ENCODE measurements at regions of chr1 and their contacts with region 1.

Region 1: GRCh38 chr1:111538343-111539025 is 35.1 kb upstream of the ADORA3 start:
- DNase-seq: no peak
- H3K4me3 ChIP-seq: no peak overlapping the region
- H3K27ac ChIP-seq: no peak overlapping the region
- H3K4me1 ChIP-seq: no peaks in the 10 kb centered on the region
- H3K27me3 ChIP-seq: no peaks in the 10 kb centered on the region
- CTCF ChIP-seq: no peak
- POLR2A ChIP-seq: no peak

Region 2: GRCh38 chr1:111481387-111482221 is 56.9 kb before region 1 on chr1:
- intact Hi-C with region 1: loop called (anchors 2 kb)
- DNase-seq: peak in 1 of 2 donors; percentile 50
- H3K4me3 ChIP-seq: no peak overlapping the region
- H3K27ac ChIP-seq: no peak overlapping the region
- H3K4me1 ChIP-seq: no peaks in the 10 kb centered on the region
- H3K27me3 ChIP-seq: no peaks in the 10 kb centered on the region
- CTCF ChIP-seq: peak in 2 of 3 donors; percentile 38 to 40
- POLR2A ChIP-seq: no peak

Region 3: DNA sequence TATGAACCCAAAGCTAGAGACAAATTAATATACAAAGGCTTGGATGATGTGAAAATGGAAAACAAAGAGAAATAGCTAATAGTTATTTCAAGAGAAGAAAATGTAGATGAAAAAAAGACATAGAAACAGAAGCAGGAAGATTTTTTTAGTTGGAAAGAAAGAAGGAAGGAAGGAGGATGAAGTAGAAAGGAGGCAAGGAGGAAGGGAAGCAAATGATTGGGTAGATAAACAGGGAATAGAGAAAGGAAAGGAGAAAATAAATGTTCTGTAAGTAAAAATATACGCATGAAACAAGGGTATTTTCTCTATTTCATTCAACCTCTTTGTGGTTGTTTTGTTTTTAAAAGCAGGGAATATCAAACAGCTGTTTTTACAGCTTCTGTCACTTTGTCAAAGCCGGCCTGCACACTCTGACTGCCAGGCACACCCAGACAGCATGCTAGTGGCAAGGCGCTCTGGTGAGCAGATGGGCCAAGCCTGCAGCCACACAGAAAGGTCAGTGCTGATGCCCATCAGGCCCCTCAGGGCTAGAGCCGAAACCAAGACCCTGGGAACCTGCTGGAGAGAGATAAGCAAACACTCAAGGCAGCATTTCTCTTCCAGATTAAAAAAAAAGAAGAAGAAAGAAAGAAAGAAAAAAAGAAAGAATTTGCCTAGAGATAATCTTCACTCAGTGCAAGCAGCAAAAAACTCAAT is 784.6 kb after region 1 on chr1:
- intact Hi-C with region 1: loop called (anchors 5 kb)
- DNase-seq: no peak
- H3K4me3 ChIP-seq: no peak overlapping the region
- H3K27ac ChIP-seq: no peak overlapping the region
- H3K4me1 ChIP-seq: no peaks in the 10 kb centered on the region
- H3K27me3 ChIP-seq: no peaks in the 10 kb centered on the region
- CTCF ChIP-seq: no peak
- POLR2A ChIP-seq: no peak

Measured in breast epithelium (tissue), 4 donors.